ENCODE measurements at regions of chr6 and their contacts with region 1.

Region 1: GRCh38 chr6:99905209-99906106 is 88.6 kb downstream of the MCHR2 start:
- DNase-seq: no peak
- H3K4me3 Mint-ChIP-seq: no peak overlapping the region
- H3K27ac Mint-ChIP-seq: no peak overlapping the region
- H3K4me1 Mint-ChIP-seq: no peaks in the 10 kb centered on the region
- H3K27me3 Mint-ChIP-seq: no peaks in the 10 kb centered on the region

Region 2: DNA sequence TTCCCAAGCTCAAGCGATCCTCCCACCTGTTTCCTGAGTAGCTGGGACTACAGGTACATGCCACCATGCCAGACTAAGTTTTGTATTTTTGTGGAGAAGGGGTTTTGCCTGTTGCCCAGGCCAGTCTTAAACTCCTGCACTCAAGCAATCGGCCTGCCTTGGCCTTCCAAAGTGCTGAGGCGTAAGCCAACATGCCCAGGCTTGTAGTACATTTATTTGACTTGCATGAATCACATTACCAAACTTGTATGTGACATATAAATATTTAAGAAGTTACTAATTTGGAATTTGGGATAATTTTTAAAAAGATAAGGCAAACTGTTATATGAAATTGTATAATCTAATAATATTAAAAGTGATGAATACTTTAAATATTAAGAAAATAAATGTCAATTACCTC is 69.0 kb before region 1 on chr6:
- intact Hi-C with region 1: no loop called
- DNase-seq: peak; percentile 40
- H3K4me3 Mint-ChIP-seq: no peak overlapping the region
- H3K27ac Mint-ChIP-seq: no peak overlapping the region
- H3K4me1 Mint-ChIP-seq: no peaks in the 10 kb centered on the region
- H3K27me3 Mint-ChIP-seq: peaks cover 4% of the 10 kb centered on the region

Region 3: GRCh38 chr6:99868074-99868702 is 37.3 kb before region 1 on chr6:
- intact Hi-C with region 1: loop called (anchors 1 kb)
- DNase-seq: peak; percentile 90
- H3K4me3 Mint-ChIP-seq: no peak overlapping the region
- H3K27ac Mint-ChIP-seq: no peak overlapping the region
- H3K4me1 Mint-ChIP-seq: no peaks in the 10 kb centered on the region
- H3K27me3 Mint-ChIP-seq: peaks cover 20% of the 10 kb centered on the region

Region 4: GRCh38 chr6:99951016-99951805 is 45.8 kb after region 1 on chr6:
- intact Hi-C with region 1: no loop called
- DNase-seq: no peak
- H3K4me3 Mint-ChIP-seq: no peak overlapping the region
- H3K27ac Mint-ChIP-seq: no peak overlapping the region
- H3K4me1 Mint-ChIP-seq: no peaks in the 10 kb centered on the region
- H3K27me3 Mint-ChIP-seq: no peaks in the 10 kb centered on the region

Region 5: GRCh38 chr6:100415780-100416179 is 510.3 kb after region 1 on chr6:
- intact Hi-C with region 1: no loop called
- DNase-seq: no peak
- H3K4me3 Mint-ChIP-seq: no peak overlapping the region
- H3K27ac Mint-ChIP-seq: no peak overlapping the region
- H3K4me1 Mint-ChIP-seq: no peaks in the 10 kb centered on the region
- H3K27me3 Mint-ChIP-seq: peaks cover 12% of the 10 kb centered on the region